ENCODE measurements at regions of chr13 and their contacts with region 1.

Region 1: DNA sequence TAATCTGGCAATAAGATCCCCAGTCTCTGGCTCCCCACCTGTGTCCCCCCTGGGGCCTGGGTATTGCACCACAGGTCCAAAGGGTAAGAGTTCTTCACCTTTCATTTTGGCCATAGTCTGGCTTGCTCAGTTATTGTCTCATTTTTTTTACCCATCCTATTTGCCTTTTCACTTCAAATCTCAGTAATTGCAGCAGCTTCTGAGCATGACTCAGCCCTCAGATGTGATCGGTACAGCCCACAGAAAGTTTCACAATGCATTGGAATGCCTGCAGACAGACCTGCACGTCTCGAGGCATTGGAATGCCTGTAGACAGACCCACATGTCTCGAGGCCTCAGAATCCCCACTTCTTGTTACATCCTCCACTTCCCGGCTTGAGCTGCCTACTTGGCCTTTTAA is 173.6 kb downstream of the NUFIP1 start:
- DNase-seq: peak; percentile 10
- H3K4me3 Mint-ChIP-seq: no peak overlapping the region
- H3K27ac Mint-ChIP-seq: no peak overlapping the region
- H3K4me1 Mint-ChIP-seq: peaks cover 26% of the 10 kb centered on the region
- H3K27me3 Mint-ChIP-seq: peaks cover 45% of the 10 kb centered on the region

Region 2: GRCh38 chr13:44710576-44710975 is 105.0 kb before region 1 on chr13:
- intact Hi-C with region 1: loop called (anchors 5 kb)
- DNase-seq: no peak
- H3K4me3 Mint-ChIP-seq: no peak overlapping the region
- H3K27ac Mint-ChIP-seq: no peak overlapping the region
- H3K4me1 Mint-ChIP-seq: peaks cover 8% of the 10 kb centered on the region
- H3K27me3 Mint-ChIP-seq: peaks cover 15% of the 10 kb centered on the region

Region 3: DNA sequence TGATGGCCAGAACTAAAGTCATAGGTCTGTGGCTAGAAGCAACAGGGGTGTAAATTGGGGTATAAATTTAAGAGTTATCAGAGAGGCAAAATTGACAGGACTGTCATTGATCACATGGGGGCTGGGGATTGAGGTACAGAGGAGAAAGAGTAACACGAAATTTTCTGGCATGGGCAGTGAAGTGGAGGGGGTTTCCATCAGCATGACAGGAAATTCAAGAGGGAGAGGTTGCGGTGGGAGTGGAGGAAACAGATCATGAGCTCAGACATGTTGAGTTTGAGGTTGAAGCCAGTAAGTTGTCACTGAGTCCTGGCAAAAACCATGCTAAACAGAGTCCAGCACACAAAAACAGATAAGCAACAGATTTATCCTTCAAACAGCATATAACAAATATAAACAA is 47.4 kb before region 1 on chr13:
- intact Hi-C with region 1: loop called (anchors 5 kb)
- DNase-seq: peak; percentile 16
- H3K4me3 Mint-ChIP-seq: no peak overlapping the region
- H3K27ac Mint-ChIP-seq: peak overlapping the region; percentile 52
- H3K4me1 Mint-ChIP-seq: peaks cover 27% of the 10 kb centered on the region
- H3K27me3 Mint-ChIP-seq: peaks cover 6% of the 10 kb centered on the region

Region 4: DNA sequence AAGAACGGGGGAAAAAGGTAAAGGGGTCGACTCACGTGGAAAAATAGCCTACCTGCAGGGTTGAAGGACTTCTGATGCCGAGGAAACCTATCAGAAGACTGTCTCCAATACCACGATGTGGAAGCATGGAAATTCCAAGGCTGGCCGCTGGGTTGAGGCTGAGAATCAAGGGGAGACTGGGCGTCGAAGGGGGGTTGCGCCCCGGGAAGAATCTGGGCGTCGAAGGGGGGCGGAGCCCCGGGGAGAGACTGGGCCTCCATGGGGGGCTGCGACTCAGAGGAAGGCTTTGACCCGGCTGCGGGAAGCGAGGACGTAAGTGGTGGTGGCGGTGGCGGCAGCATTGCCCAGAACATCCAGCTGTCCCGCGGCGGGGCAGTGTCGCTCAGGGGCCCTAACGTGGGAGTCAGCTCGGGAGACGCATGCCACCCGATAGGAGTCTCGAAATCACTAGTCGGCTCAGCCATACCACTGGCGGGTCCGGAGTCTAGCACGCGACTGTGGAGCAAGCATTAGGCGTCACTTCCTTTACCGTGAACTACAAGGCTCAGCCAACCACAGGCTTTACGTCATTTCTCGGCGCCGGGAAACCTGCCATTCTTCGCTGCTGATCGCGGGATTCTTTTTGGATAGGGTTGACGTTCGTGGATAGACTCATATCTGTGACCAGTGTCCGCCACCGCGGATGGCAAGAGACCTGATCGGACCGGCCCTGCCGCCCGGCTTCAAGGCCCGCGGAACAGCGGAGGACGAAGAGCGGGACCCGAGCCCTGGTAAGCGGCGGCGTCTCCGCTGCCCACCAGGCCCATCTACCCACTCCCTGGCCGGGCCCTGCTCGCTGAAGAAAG is 173.6 kb after region 1 on chr13 and contains the starts of genes GPALPP1 and NUFIP1:
- intact Hi-C with region 1: loop called (anchors 2 kb)
- DNase-seq: peak; percentile 88
- H3K4me3 Mint-ChIP-seq: peak within 1 kb of the TSS; percentile 95
- H3K27ac Mint-ChIP-seq: peak within 1 kb of the TSS; percentile 95
- H3K4me1 Mint-ChIP-seq: peaks cover 43% of the 10 kb centered on the region
- H3K27me3 Mint-ChIP-seq: no peaks in the 10 kb centered on the region
- total RNA-seq, gene GPALPP1: 29.1 and 32.9 TPM in 2 replicates
- total RNA-seq, gene NUFIP1: 9.5 and 10.3 TPM in 2 replicates